ENCODE measurements at regions of chr18 and their contacts with region 1.

Region 1: DNA sequence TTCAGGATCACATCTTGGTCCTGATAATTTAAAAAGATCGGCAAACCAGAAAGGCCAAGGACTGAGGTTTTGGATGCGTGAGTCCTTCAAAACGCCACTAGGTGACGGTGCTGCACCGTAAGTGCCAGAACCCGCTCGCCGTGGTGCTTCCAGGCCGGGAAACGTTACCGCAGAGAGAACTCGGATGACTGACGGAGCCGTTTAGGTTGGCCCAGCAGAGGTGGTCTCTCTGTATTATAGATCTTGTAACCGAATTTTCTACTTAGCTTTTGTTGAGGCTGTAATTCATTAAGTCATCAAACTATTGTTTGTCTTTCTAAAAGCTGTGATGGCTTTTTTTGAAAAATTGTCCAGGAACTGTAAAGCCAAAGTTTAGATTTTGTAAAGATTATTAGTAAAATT is 39.8 kb upstream of the ADCYAP1 start:
- ATAC-seq: peak; percentile 44 to 98 (median 74)
- H3K4me3 ChIP-seq: no peak overlapping the region
- H3K27ac ChIP-seq: no peak overlapping the region
- H3K4me1 ChIP-seq: no peaks in the 10 kb centered on the region

Region 2: GRCh38 chr18:658001-658946 is 206.6 kb before region 1 on chr18:
- in situ Hi-C with region 1: no loop called
- ATAC-seq: peak; percentile 81 to 87 (median 84)
- H3K4me3 ChIP-seq: peak overlapping the region; percentile 59 to 82 (median 67)
- H3K27ac ChIP-seq: peak overlapping the region; percentile 3 to 81
- H3K4me1 ChIP-seq: peaks cover 0 to 2% of the 10 kb centered on the region in 2 donors

Region 3: DNA sequence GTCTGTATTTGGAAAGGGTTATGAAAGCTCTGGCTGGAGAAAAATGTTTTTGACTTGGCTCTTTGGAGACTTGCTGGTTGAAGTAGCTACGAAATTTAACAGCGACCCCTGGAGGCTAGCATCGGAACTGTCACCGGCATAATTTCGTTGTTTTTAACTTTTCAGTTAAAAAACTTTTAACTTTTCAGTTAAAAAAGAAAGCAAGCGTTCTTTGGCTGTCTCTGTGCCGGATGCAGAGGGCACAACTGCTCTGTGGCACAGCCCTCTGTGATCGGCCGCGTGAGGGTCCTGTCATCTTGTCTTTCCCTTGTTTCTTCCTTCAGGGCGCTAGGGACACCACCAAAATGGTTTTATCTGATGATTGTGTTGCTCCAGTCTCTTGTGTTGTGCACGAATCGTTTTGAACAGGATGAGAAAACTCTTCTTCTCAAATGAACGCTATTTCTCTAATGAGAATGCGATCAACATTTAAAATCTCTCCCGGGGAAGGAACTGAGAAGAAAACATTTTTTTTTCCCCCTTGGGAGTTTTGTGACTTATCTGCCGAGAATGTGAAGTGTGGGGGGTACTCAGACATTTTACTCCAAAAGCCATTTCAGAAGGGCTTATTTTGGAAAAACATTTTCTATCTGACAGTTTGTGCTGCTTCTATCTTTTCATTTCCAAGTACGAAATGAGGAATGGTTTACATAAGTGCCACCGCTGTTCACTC is 96.9 kb after region 1 on chr18:
- in situ Hi-C with region 1: loop called in 2 of 9 experiments (anchors 10 to 25 kb)
- ATAC-seq: peak in 1 of 8 experiments; percentile 37
- H3K4me3 ChIP-seq: no peak overlapping the region
- H3K27ac ChIP-seq: no peak overlapping the region
- H3K4me1 ChIP-seq: no peaks in the 10 kb centered on the region

Region 4: GRCh38 chr18:1438458-1438910 is 573.6 kb after region 1 on chr18:
- in situ Hi-C with region 1: loop called in 1 of 9 experiments (anchors 25 kb)
- ATAC-seq: peak in 5 of 8 experiments; percentile 56 to 93 (median 79)
- H3K4me3 ChIP-seq: no peak overlapping the region
- H3K27ac ChIP-seq: no peak overlapping the region
- H3K4me1 ChIP-seq: peaks cover 0 to 3% of the 10 kb centered on the region in 2 donors

Region 5: GRCh38 chr18:1585879-1586488 is 721.1 kb after region 1 on chr18:
- in situ Hi-C with region 1: loop called in 1 of 9 experiments (anchors 25 kb)
- ATAC-seq: peak in 5 of 8 experiments; percentile 39 to 85 (median 68)
- H3K4me3 ChIP-seq: no peak overlapping the region
- H3K27ac ChIP-seq: no peak overlapping the region
- H3K4me1 ChIP-seq: no peaks in the 10 kb centered on the region

Region 6: DNA sequence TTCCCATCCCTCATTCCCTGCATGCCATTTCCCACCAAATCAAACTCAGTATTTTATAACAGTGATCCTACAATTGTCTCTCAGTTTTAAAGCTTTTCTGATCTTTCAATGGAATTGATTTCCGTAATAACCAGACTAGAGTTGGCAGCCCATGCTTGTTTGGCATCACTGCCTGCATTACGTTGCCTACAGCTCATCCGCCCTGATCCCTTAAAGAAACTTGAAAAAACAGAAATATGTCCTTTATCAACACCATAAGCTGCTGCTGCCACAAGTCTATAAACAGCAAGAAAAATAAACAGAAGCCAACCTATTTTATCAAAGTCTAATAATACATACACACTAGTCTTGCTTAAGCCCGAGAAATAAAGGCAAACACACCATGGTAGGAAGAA is 1375.4 kb after region 1 on chr18:
- in situ Hi-C with region 1: loop called in 1 of 9 experiments (anchors 25 kb)
- ATAC-seq: no peak
- H3K4me3 ChIP-seq: no peak overlapping the region
- H3K27ac ChIP-seq: no peak overlapping the region
- H3K4me1 ChIP-seq: peaks cover 0 to 2% of the 10 kb centered on the region in 2 donors

Region 7: DNA sequence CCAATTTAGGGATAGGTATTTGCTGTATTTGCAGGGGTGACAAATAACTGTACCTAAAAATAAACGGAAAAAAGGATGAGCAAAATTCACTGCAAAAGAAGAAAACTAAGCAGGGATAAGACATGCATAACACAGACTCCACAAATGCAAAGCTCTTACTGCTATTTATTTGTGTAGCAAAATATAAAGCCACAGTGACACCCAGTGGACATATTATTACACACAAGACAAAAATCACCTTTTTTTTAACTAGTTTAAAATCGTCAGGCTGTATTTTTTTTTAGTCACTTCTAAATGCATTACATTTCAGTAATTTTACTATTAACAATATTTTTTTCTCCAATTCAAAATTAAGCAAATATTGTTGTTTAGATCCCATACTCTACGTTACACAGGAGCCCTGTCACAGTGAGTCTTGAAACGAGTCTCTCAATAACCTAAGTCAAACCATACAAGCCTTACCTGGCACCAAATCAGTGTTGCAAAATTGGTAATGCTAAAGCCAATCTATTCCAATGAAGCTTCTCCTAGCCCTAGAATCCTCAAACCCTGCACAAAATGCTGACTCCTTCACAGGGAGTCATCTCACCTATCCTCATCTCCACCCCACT is 1682.7 kb after region 1 on chr18:
- in situ Hi-C with region 1: loop called in 5 of 9 experiments (anchors 25 kb)
- ATAC-seq: peak in 5 of 8 experiments; percentile 45 to 69 (median 63)
- H3K4me3 ChIP-seq: no peak overlapping the region
- H3K27ac ChIP-seq: no peak overlapping the region
- H3K4me1 ChIP-seq: no peaks in the 10 kb centered on the region

Measured in motor neuron (in vitro differentiated cells).